Activated CD8-positive, alpha-beta memory T cell treated with anti-CD3 and anti-CD28 coated beads, Interleukin-2, amount 10 ng/mL, durations not matched to agents 7 days and 5 days (primary cell): ENCODE measurements at regions of chr6 and their contacts with region 1.

Region 1: GRCh38 chr6:132512638-132513632 is at the start of gene STX7:
- DNase-seq: peak; percentile 91
- ATAC-seq: peak; percentile 97
- H3K4me3 Mint-ChIP-seq: peak within 1 kb of the TSS; percentile 92
- H3K27ac Mint-ChIP-seq: peak within 1 kb of the TSS; percentile 87
- H3K4me1 Mint-ChIP-seq: peaks cover 26% of the 10 kb centered on the region
- H3K27me3 Mint-ChIP-seq: peaks cover 10% of the 10 kb centered on the region
- total RNA-seq, gene STX7: 17.2 to 19.5 TPM

Region 2: GRCh38 chr6:132495604-132496079 is 17.3 kb before region 1 on chr6:
- CTCF ChIA-PET with region 1: interaction called, 13 read pairs
- DNase-seq: no peak
- ATAC-seq: peak; percentile 48
- H3K4me3 Mint-ChIP-seq: no peak overlapping the region
- H3K27ac Mint-ChIP-seq: peak overlapping the region; percentile 61
- H3K4me1 Mint-ChIP-seq: peaks cover 30% of the 10 kb centered on the region
- H3K27me3 Mint-ChIP-seq: no peaks in the 10 kb centered on the region

Region 3: DNA sequence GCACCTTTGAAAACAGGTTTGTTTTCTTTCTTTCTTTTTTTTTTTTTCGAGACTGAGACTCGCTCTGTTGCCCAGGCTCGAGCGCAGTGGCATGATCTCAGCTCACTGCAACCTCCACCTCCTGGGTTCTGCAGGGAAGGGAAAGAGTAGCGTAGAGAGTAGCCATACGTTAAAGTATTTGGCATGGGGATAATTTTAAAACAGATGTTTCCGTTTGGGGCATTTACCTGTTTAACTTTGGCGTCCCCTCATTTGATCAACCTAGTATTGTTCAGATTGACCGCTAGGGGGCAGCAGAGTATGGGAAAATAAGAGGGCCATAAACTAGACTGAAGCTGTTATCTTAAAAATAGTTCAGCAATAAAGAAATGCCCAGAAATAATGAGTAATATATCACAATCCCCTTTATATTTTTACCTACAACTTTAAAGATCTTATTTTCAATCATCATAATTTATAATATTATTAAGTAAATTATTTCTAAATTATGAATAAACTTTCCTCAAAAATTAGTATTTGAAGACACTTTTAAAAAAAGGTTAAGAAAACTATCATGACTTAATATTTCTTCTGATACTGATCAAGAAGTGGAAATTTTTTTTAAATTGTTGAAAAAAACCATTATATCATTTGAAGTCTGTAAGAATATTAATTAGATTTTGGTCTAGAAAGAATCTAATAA is 17.5 kb after region 1 on chr6:
- CTCF ChIA-PET with region 1: interaction called, 13 read pairs
- DNase-seq: peak; percentile 76
- ATAC-seq: peak; percentile 78
- H3K4me3 Mint-ChIP-seq: no peak overlapping the region
- H3K27ac Mint-ChIP-seq: no peak overlapping the region
- H3K4me1 Mint-ChIP-seq: peaks cover 3% of the 10 kb centered on the region
- H3K27me3 Mint-ChIP-seq: peaks cover 27% of the 10 kb centered on the region